ENCODE measurements at regions of chr7 and their contacts with region 1.

Region 1: DNA sequence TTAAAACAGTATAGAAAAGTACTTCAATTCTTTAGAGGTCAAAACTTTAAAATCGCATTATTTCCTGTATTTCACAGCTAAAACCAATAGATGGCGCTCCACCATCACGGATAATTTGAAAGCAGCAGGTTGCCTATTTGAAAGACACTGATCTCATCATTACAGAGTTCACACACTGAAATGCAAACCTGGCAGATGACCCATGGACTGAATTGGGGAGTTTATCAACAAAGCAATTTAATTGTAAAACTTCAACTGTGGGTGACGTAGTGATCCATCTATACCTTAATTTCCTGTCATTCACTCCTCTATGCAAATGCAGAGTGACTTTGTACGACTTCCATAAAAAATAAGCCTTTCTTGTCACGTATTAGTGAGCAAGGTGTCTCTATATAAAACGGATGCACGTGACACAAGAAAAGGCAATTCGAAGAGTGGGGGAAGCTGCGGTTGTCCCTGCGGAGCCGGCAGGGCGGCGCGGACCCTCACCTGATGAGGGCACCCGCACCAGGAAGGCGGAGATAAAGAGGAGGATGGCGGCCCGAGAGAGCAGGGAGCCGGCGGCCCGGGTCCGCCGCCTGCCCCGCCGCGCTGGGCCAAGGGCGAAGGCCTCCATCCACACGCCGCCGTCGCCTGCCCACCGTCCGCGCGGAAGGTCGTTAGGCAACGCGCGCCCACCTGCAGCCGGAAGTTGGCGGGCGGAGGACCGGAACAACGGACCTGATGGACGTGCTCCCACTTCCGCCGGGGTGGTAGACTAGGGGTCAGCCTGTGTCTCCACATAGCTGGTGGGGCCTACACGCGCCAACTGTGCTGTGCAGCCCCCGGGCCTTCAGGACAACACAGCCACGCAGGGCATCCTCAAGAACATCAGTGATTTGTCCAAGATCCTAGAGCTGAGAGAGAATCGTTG is at the start of gene ZPBP:
- DNase-seq: peak in 8 of 9 donors; percentile 34 to 77 (median 70)
- ATAC-seq: peak; percentile 88
- H3K4me3 ChIP-seq: peak within 1 kb of the TSS; percentile 59
- H3K4me3 Mint-ChIP-seq: peak within 1 kb of the TSS; percentile 85 to 96 (median 89)
- H3K27ac ChIP-seq: peak within 1 kb of the TSS; percentile 62
- H3K27ac Mint-ChIP-seq: peak within 1 kb of the TSS; percentile 62 to 93 (median 88)
- H3K4me1 ChIP-seq: no peaks in the 10 kb centered on the region
- H3K4me1 Mint-ChIP-seq: peaks cover 8 to 22% (median 10%) of the 10 kb centered on the region in 7 donors
- H3K27me3 ChIP-seq: no peaks in the 10 kb centered on the region
- H3K27me3 Mint-ChIP-seq: peaks cover 0 to 27% (median 0%) of the 10 kb centered on the region in 5 donors
- total RNA-seq, gene ZPBP: not detected

Region 2: GRCh38 chr7:49845626-49846025 is 247.2 kb before region 1 on chr7:
- CTCF ChIA-PET with region 1: no interaction called
- POLR2A ChIA-PET with region 1: no interaction called
- intact Hi-C with region 1: no loop called
- DNase-seq: no peak
- ATAC-seq: no peak
- H3K4me3 ChIP-seq: no peak overlapping the region
- H3K4me3 Mint-ChIP-seq: no peak overlapping the region
- H3K27ac ChIP-seq: no peak overlapping the region
- H3K27ac Mint-ChIP-seq: no peak overlapping the region
- H3K4me1 ChIP-seq: no peaks in the 10 kb centered on the region
- H3K4me1 Mint-ChIP-seq: peaks cover 0 to 4% (median 0%) of the 10 kb centered on the region in 7 donors
- H3K27me3 ChIP-seq: no peaks in the 10 kb centered on the region
- H3K27me3 Mint-ChIP-seq: peaks cover 2 to 25% (median 11%) of the 10 kb centered on the region in 5 donors

Region 3: DNA sequence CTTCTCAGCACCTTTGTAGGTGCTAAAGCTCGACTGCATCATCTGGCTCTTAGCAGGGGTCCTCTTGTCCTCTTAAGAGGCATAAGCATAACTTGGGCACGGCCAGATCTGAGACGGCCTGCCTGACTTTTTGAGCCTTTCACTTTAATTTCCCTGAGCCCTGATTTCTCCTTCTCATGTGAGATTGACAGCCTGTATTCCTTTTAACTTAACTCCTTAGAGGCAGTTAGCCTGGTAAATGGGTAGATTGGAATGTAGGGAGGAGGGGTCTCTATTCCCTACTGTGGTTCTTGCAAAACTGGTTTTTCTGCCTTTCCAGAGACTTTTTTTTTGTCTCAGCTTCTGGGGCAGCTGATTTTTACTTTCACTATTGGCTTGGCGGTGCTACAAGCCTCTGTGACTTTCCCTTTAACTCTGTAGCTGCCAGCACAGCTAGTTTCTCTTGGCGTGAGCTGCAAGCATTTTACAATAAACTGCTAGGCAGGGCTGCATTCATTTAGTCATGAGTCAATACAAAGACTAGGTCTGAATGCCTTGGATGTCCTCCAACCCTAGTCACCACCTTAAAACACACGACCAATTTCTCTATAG is 23.8 kb before region 1 on chr7:
- CTCF ChIA-PET with region 1: interaction called, 10 read pairs
- POLR2A ChIA-PET with region 1: interaction called, 3 read pairs
- intact Hi-C with region 1: loop called in 1 of 2 experiments (anchors 1 kb)
- DNase-seq: peak in 6 of 9 donors; percentile 36 to 65 (median 52)
- ATAC-seq: peak; percentile 71
- H3K4me3 ChIP-seq: peak overlapping the region; percentile 72
- H3K4me3 Mint-ChIP-seq: peak overlapping the region; percentile 82 to 97 (median 90)
- H3K27ac ChIP-seq: peak overlapping the region; percentile 69
- H3K27ac Mint-ChIP-seq: peak overlapping the region; percentile 87 to 99 (median 96)
- H3K4me1 ChIP-seq: peaks cover 8 to 14% of the 10 kb centered on the region in 2 donors
- H3K4me1 Mint-ChIP-seq: peaks cover 12 to 30% (median 26%) of the 10 kb centered on the region in 7 donors
- H3K27me3 ChIP-seq: no peaks in the 10 kb centered on the region
- H3K27me3 Mint-ChIP-seq: peaks cover 0 to 10% (median 5%) of the 10 kb centered on the region in 5 donors

Region 4: DNA sequence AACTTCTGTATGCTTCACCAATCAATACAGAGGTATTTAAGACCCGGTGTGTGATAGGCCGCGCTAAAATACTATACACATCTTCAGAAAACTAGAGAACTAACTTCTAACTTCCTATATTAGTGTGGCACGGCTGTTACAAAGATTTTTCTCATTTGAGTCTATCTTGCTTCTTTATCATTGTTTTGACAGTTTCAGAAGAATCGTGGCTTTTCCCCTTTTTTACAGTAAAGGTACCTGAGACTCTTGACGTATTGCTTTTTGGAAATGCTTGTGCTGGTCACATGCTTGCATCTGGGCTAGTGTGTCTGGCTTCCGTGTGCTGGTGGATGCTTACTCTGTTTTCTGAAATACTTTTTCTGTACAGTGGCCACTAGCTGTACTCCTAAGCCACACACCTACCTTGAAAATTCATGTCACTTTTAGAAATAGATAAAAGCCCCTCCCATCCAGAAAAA is 224.4 kb after region 1 on chr7:
- CTCF ChIA-PET with region 1: interaction called, 5 read pairs
- POLR2A ChIA-PET with region 1: interaction called, 3 read pairs
- intact Hi-C with region 1: loop called in 1 of 2 experiments (anchors 5 kb)
- DNase-seq: peak in 7 of 9 donors; percentile 71 to 92 (median 89)
- ATAC-seq: peak; percentile 85
- H3K4me3 ChIP-seq: peak overlapping the region; percentile 73
- H3K4me3 Mint-ChIP-seq: peak overlapping the region; percentile 81 to 100 (median 94)
- H3K27ac ChIP-seq: peak overlapping the region; percentile 90
- H3K27ac Mint-ChIP-seq: peak overlapping the region in 6 of 9 donors; percentile 90 to 100 (median 99)
- H3K4me1 ChIP-seq: peaks cover 78 to 92% of the 10 kb centered on the region in 2 donors
- H3K4me1 Mint-ChIP-seq: peaks cover 0 to 100% (median 95%) of the 10 kb centered on the region in 7 donors
- H3K27me3 ChIP-seq: no peaks in the 10 kb centered on the region
- H3K27me3 Mint-ChIP-seq: no peaks in the 10 kb centered on the region

Region 5: GRCh38 chr7:50467817-50468610 is 375.2 kb after region 1 on chr7:
- CTCF ChIA-PET with region 1: interaction called, 4 read pairs
- POLR2A ChIA-PET with region 1: no interaction called
- intact Hi-C with region 1: loop called (anchors 1 kb)
- DNase-seq: peak; percentile 61 to 79 (median 76)
- ATAC-seq: peak; percentile 97
- H3K4me3 ChIP-seq: peak overlapping the region; percentile 12
- H3K4me3 Mint-ChIP-seq: peak overlapping the region; percentile 12 to 80 (median 70)
- H3K27ac ChIP-seq: no peak overlapping the region
- H3K27ac Mint-ChIP-seq: peak overlapping the region in 7 of 9 donors; percentile 35 to 88 (median 62)
- H3K4me1 ChIP-seq: no peaks in the 10 kb centered on the region
- H3K4me1 Mint-ChIP-seq: peaks cover 8 to 14% (median 11%) of the 10 kb centered on the region in 7 donors
- H3K27me3 ChIP-seq: no peaks in the 10 kb centered on the region
- H3K27me3 Mint-ChIP-seq: peaks cover 0 to 21% (median 0%) of the 10 kb centered on the region in 5 donors

Region 6: GRCh38 chr7:50679218-50680007 is 586.6 kb after region 1 on chr7:
- CTCF ChIA-PET with region 1: interaction called, 27 read pairs
- POLR2A ChIA-PET with region 1: no interaction called
- intact Hi-C with region 1: loop called (anchors 1 kb)
- DNase-seq: peak in 6 of 9 donors; percentile 27 to 59 (median 54)
- ATAC-seq: peak; percentile 73
- H3K4me3 ChIP-seq: no peak overlapping the region
- H3K4me3 Mint-ChIP-seq: no peak overlapping the region
- H3K27ac ChIP-seq: no peak overlapping the region
- H3K27ac Mint-ChIP-seq: no peak overlapping the region
- H3K4me1 ChIP-seq: no peaks in the 10 kb centered on the region
- H3K4me1 Mint-ChIP-seq: peaks cover 0 to 5% (median 0%) of the 10 kb centered on the region in 7 donors
- H3K27me3 ChIP-seq: no peaks in the 10 kb centered on the region
- H3K27me3 Mint-ChIP-seq: peaks cover 0 to 22% (median 0%) of the 10 kb centered on the region in 5 donors

Region 7: DNA sequence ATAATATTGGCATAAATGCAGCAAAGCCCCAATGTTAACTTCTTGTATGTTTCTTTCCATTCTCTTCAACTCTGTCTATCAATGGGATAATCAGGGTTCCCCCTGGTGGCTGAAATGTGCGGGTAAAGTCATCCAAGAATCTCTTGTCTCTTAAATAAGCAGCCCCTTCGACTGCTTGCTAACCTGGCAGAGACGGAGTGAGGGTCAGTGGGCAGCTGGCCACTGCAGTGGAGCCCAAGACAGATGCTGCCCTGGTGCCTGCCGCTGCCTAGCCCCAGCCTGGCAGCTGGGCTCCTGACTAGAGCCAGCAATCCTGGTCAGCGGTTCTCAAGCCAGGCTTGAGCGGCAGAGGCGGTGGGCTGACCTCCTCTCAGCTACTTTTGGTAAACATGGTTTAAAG is 974.9 kb after region 1 on chr7:
- CTCF ChIA-PET with region 1: no interaction called
- POLR2A ChIA-PET with region 1: no interaction called
- intact Hi-C with region 1: loop called in 1 of 2 experiments (anchors 1 kb)
- DNase-seq: peak in 6 of 9 donors; percentile 32 to 55 (median 44)
- ATAC-seq: peak; percentile 13
- H3K4me3 ChIP-seq: no peak overlapping the region
- H3K4me3 Mint-ChIP-seq: no peak overlapping the region
- H3K27ac ChIP-seq: no peak overlapping the region
- H3K27ac Mint-ChIP-seq: no peak overlapping the region
- H3K4me1 ChIP-seq: no peaks in the 10 kb centered on the region
- H3K4me1 Mint-ChIP-seq: peaks cover 0 to 2% (median 0%) of the 10 kb centered on the region in 7 donors
- H3K27me3 ChIP-seq: no peaks in the 10 kb centered on the region
- H3K27me3 Mint-ChIP-seq: no peaks in the 10 kb centered on the region

Region 8: DNA sequence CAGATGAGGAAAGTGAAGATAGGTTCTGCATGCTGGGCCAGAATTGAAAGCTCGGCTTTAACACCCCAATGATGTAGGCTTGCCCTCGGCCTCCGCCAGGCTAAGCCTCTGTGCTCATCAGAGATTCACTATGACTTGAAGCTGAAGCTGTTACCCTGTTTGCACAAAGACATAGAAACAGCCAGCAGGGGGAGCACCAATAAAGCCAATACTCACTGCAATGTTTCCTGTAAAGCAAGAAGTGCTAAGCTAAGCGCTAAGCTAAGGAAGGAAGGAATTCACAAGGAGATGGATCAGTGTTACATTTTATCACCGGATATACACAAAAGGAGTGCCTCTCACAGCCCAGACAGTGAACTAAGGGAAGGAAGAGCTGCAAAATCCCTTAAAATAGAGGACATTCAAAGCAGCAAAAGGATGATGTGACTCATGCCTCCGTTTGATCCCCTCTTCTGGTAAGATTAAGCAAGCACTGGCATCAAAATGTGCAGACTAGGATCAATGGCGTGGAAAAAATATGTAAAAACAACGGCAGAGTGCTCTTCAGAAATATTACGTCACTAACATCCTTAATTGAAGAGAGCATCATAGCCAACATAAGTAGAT is 1070.0 kb after region 1 on chr7:
- CTCF ChIA-PET with region 1: interaction called, 27 read pairs
- POLR2A ChIA-PET with region 1: interaction called, 5 read pairs
- intact Hi-C with region 1: loop called in 1 of 2 experiments (anchors 1 kb)
- DNase-seq: peak; percentile 18 to 66 (median 54)
- ATAC-seq: peak; percentile 77
- H3K4me3 ChIP-seq: no peak overlapping the region
- H3K4me3 Mint-ChIP-seq: peak overlapping the region in 2 of 10 donors; percentile 7 to 44
- H3K27ac ChIP-seq: no peak overlapping the region
- H3K27ac Mint-ChIP-seq: no peak overlapping the region
- H3K4me1 ChIP-seq: no peaks in the 10 kb centered on the region
- H3K4me1 Mint-ChIP-seq: peaks cover 0 to 5% (median 5%) of the 10 kb centered on the region in 7 donors
- H3K27me3 ChIP-seq: no peaks in the 10 kb centered on the region
- H3K27me3 Mint-ChIP-seq: peaks cover 21 to 39% (median 32%) of the 10 kb centered on the region in 5 donors